ENCODE measurements at regions of chr11 and their contacts with region 1.

Region 1: GRCh38 chr11:34585735-34586487 is 35.0 kb upstream of the EHF start:
- DNase-seq: peak; percentile 39
- H3K4me3 ChIP-seq: no peak overlapping the region; the same call in 1 of the 2 replicates
- H3K27ac ChIP-seq: no peak overlapping the region
- H3K27me3 ChIP-seq: no peaks in the 10 kb centered on the region
- CTCF ChIP-seq: peak; percentile 69

Region 2: GRCh38 chr11:34512840-34513681 is 72.8 kb before region 1 on chr11:
- CTCF ChIA-PET with region 1: interaction called, 14 read pairs
- POLR2A ChIA-PET with region 1: no interaction called
- DNase-seq: no peak
- H3K4me3 ChIP-seq: no peak overlapping the region
- H3K27ac ChIP-seq: no peak overlapping the region
- H3K27me3 ChIP-seq: no peaks in the 10 kb centered on the region
- CTCF ChIP-seq: peak; percentile 89

Region 3: DNA sequence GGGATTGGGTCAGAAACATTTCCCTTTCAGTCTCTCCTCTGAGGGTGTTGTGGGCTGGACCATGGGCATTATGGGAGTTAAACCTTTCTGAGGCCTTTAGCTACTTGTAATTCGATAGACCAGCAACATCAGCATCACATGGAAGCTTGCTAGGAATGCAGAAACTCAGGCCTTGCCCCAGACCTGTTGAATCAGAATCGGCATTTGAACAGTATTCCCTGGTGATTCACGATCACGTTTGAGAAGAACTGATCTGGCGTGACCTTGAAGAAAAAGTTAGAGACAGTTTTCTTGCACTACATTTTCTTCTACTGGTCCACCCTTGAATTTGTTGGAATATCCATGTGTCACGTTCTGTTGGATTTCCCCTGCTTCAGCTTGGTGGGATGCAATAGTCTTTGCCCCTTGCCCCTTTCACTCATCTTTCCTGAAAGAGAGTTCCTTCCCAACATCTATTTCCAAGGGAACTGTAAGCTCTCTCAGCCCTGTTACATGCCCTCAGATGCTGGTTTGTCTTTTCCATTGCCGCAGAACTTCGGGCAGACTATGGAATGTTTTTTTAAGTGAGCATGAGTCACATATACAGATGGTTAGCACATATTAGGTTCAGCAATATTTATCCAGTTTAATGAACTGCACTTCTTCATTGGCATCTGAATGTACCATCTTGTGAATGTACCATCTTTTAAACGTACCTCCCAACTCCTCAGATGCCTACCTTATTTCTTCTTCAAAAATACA is 58.9 kb after region 1 on chr11:
- CTCF ChIA-PET with region 1: interaction called, 13 read pairs
- POLR2A ChIA-PET with region 1: no interaction called
- DNase-seq: peak; percentile 59
- H3K4me3 ChIP-seq: no peak overlapping the region
- H3K27ac ChIP-seq: peak overlapping the region; percentile 89
- H3K27me3 ChIP-seq: no peaks in the 10 kb centered on the region
- CTCF ChIP-seq: no peak

Region 4: DNA sequence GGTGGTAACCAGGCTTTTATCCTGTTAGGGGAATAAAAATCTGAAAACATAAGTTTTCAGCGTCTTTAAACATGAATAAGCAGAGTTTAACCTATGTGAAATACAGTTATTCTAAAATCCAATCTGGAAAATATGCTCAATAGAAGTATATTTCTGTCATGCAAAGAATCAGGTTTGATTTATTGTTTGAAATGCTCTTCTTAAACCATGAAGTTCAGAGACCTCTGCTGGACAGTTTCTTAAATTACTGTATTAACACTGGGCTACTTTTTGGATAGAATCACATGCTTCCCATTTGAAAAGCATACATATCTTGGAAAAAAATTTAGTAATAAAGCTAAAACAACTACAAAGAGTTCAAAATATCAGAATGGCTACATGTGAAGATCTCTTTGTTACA is 304.9 kb after region 1 on chr11:
- CTCF ChIA-PET with region 1: interaction called, 213 read pairs
- POLR2A ChIA-PET with region 1: no interaction called
- DNase-seq: peak; percentile 3
- H3K4me3 ChIP-seq: no peak overlapping the region
- H3K27ac ChIP-seq: no peak overlapping the region
- H3K27me3 ChIP-seq: no peaks in the 10 kb centered on the region
- CTCF ChIP-seq: peak; percentile 56

Region 5: GRCh38 chr11:34899633-34900016 is 313.7 kb after region 1 on chr11:
- CTCF ChIA-PET with region 1: interaction called, 16 read pairs
- POLR2A ChIA-PET with region 1: no interaction called
- DNase-seq: no peak
- H3K4me3 ChIP-seq: no peak overlapping the region
- H3K27ac ChIP-seq: no peak overlapping the region
- H3K27me3 ChIP-seq: no peaks in the 10 kb centered on the region
- CTCF ChIP-seq: no peak

Region 6: GRCh38 chr11:34916015-34916842 is 330.3 kb after region 1 on chr11 and contains the starts of genes APIP and PDHX:
- CTCF ChIA-PET with region 1: interaction called, 10 read pairs
- POLR2A ChIA-PET with region 1: no interaction called
- DNase-seq: peak; percentile 93
- H3K4me3 ChIP-seq: peak within 1 kb of the TSS; percentile 96
- H3K27ac ChIP-seq: peak within 1 kb of the TSS; percentile 93
- H3K27me3 ChIP-seq: no peaks in the 10 kb centered on the region
- CTCF ChIP-seq: no peak
- polyA plus RNA-seq, gene APIP: 15.0 and 20.1 TPM in 2 replicates
- polyA plus RNA-seq, gene PDHX: 49.6 and 68.8 TPM in 2 replicates

Measured in AG04450 (cell line).